Heart right ventricle (tissue), 16 donors: ENCODE measurements at regions of chr18 and their contacts with region 1.

Region 1: DNA sequence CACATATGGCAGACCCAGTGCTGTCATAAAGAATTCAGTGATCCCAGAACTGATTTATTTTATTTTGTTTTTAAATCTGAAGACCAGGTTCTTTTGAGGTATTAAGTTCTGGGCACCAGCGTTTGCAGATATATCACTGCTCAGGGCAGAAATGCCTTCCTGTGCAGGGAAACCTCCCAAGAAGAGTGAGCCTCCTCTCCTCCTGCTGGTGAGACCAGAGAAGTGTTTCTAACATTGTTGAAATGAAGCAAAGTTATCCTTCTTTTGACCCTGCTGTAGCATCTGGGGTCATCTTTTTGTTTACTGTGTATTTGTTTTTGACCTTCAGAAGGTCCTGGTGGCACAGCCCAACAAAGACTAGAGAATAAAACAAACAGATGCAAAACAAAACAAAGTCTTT is 94.0 kb downstream of the AQP4 start:
- DNase-seq: no peak
- ATAC-seq: peak in 3 of 8 donors; percentile 38 to 73 (median 42)
- H3K4me3 ChIP-seq: no peak overlapping the region
- H3K27ac ChIP-seq: no peak overlapping the region
- H3K4me1 ChIP-seq: no peaks in the 10 kb centered on the region
- H3K27me3 ChIP-seq: peaks cover 0 to 22% (median 4%) of the 10 kb centered on the region in 7 donors
- CTCF ChIP-seq: peak in 8 of 9 donors; percentile 18 to 57 (median 51)

Region 2: GRCh38 chr18:26307189-26307773 is 464.2 kb before region 1 on chr18:
- intact Hi-C with region 1: loop called in 1 of 10 experiments (anchors 10 kb)
- DNase-seq: peak in 1 of 2 donors; percentile 8
- ATAC-seq: no peak
- H3K4me3 ChIP-seq: no peak overlapping the region
- H3K27ac ChIP-seq: no peak overlapping the region
- H3K4me1 ChIP-seq: no peaks in the 10 kb centered on the region
- H3K27me3 ChIP-seq: no peaks in the 10 kb centered on the region
- CTCF ChIP-seq: peak; percentile 25 to 72 (median 60)

Region 3: DNA sequence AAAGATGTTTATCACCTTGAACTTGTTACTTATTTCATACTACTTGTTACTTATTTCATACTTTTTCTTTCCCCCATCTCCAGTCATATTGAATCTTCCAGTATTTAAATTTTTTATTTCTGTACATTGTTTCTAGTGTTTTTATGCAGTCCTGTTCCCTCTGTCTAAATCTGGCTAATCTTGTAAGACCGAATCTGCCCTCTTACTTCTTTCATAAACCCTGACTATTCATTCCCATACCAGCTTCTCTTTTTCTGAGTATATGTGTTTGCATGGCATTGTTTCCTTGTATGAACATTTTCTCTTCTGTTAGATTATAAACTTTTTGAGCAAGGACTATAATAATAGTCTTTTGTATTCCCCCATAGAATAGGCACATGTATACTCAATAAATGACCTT is 413.6 kb before region 1 on chr18:
- intact Hi-C with region 1: no loop called
- DNase-seq: no peak
- ATAC-seq: no peak
- H3K4me3 ChIP-seq: no peak overlapping the region
- H3K27ac ChIP-seq: no peak overlapping the region
- H3K4me1 ChIP-seq: no peaks in the 10 kb centered on the region
- H3K27me3 ChIP-seq: no peaks in the 10 kb centered on the region
- CTCF ChIP-seq: no peak

Region 4: GRCh38 chr18:26405190-26405801 is 366.2 kb before region 1 on chr18:
- intact Hi-C with region 1: loop called in 6 of 10 experiments (anchors 5 to 10 kb)
- DNase-seq: peak; percentile 33 to 41
- ATAC-seq: peak; percentile 65 to 90 (median 86)
- H3K4me3 ChIP-seq: no peak overlapping the region
- H3K27ac ChIP-seq: no peak overlapping the region
- H3K4me1 ChIP-seq: no peaks in the 10 kb centered on the region
- H3K27me3 ChIP-seq: no peaks in the 10 kb centered on the region
- CTCF ChIP-seq: peak; percentile 14 to 69 (median 55)

Region 5: GRCh38 chr18:26621161-26622026 is 150.1 kb before region 1 on chr18:
- intact Hi-C with region 1: loop called in 9 of 10 experiments (anchors 2 to 10 kb)
- DNase-seq: peak; percentile 27 to 46
- ATAC-seq: peak in 7 of 8 donors; percentile 57 to 91 (median 70)
- H3K4me3 ChIP-seq: peak overlapping the region in 1 of 10 donors; percentile 20
- H3K27ac ChIP-seq: no peak overlapping the region
- H3K4me1 ChIP-seq: peaks cover 0 to 9% (median 0%) of the 10 kb centered on the region in 9 donors
- H3K27me3 ChIP-seq: no peaks in the 10 kb centered on the region
- CTCF ChIP-seq: peak in 8 of 9 donors; percentile 50 to 75 (median 68)

Region 6: DNA sequence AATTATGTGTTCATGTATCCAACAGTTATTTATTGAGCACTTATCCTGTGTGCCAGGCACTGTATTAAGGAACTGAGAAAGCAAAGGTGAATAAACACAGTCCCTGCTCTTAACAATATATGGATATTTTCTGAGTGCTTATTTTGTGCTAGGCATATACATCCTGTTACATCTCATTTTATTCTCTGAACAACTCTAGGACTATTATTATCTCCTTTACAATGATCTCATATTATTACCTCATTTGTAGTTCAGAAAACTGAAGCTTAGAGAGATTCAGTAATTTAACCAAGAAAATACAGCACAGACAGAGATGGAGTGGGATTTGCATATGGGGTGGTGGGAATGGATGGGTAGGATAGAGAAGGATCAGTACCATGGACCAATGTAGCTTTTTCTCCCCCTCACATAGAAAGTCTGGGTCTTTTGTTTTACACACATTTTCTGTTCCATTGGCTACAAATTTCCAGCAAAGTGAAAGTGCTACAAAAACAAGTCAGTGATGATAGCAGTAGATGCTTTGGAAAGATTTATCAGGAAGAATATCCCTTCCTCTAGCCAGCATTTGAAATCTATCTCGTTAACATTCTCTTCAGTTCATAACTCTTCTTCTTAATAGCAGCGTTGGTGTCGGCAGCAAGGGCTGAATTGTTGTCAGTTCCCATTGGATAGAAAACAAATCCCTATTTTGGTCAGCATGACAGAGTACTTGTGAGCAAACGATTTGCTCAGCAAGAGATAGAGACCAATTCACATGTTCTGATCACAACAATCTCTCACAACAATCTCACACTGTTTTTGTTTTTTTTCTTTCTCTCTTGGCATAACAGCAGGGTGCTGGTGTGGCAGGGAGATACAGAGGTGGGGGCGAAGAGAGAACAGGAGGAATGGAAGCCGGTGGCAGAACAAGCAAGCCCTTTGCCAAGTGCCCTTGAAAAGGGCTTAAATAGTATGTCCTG is 120.9 kb before region 1 on chr18:
- intact Hi-C with region 1: no loop called
- DNase-seq: no peak
- ATAC-seq: peak in 7 of 8 donors; percentile 42 to 77 (median 69)
- H3K4me3 ChIP-seq: peak overlapping the region in 6 of 10 donors; percentile 1 to 24 (median 14)
- H3K27ac ChIP-seq: peak overlapping the region; percentile 21 to 79 (median 60)
- H3K4me1 ChIP-seq: peaks cover 0 to 23% (median 8%) of the 10 kb centered on the region in 9 donors
- H3K27me3 ChIP-seq: peaks cover 0 to 39% (median 0%) of the 10 kb centered on the region in 7 donors
- CTCF ChIP-seq: no peak